PC-3 (cell line): ENCODE measurements at regions of chr17 and their contacts with region 1.

Region 1: GRCh38 chr17:15392326-15392741 is 50.9 kb upstream of the TEKT3 start:
- DNase-seq: peak; percentile 99
- ATAC-seq: peak; percentile 98
- H3K4me3 ChIP-seq: no peak overlapping the region
- H3K27ac ChIP-seq: peak overlapping the region; percentile 93
- H3K4me1 ChIP-seq: peaks cover 23% of the 10 kb centered on the region
- H3K27me3 ChIP-seq: no peaks in the 10 kb centered on the region
- CTCF ChIP-seq: no peak

Region 2: GRCh38 chr17:15348021-15348420 is 44.3 kb before region 1 on chr17:
- CTCF ChIA-PET with region 1: no interaction called
- POLR2A ChIA-PET with region 1: no interaction called
- intact Hi-C with region 1: loop called (anchors 5 kb)
- DNase-seq: peak; percentile 85
- ATAC-seq: peak; percentile 74
- H3K4me3 ChIP-seq: no peak overlapping the region
- H3K27ac ChIP-seq: peak overlapping the region; percentile 64
- H3K4me1 ChIP-seq: peaks cover 61% of the 10 kb centered on the region
- H3K27me3 ChIP-seq: no peaks in the 10 kb centered on the region
- CTCF ChIP-seq: no peak

Region 3: DNA sequence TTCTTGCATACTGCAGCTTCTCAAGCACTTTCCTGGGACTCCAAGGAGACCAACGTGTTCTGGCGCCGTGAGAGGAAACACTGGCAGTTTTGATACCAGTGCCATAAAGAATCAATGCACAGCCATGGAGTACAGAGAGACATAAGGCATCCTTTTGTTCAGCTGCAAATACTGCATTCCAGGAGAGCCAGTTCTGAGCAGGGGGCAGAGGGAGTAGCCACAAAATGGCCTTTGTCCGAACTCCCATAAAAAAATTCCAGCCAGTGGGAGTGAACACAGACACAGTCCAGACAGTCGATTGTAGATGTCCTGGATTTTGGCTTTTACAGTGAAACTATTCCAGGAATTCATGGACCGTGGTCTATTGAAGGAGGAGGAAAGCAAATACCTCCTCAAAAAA is 14.7 kb before region 1 on chr17:
- CTCF ChIA-PET with region 1: no interaction called
- POLR2A ChIA-PET with region 1: no interaction called
- intact Hi-C with region 1: loop called (anchors 2 kb)
- DNase-seq: peak; percentile 97
- ATAC-seq: peak; percentile 74
- H3K4me3 ChIP-seq: peak overlapping the region; percentile 47
- H3K27ac ChIP-seq: peak overlapping the region; percentile 93
- H3K4me1 ChIP-seq: peaks cover 44% of the 10 kb centered on the region
- H3K27me3 ChIP-seq: no peaks in the 10 kb centered on the region
- CTCF ChIP-seq: no peak

Region 4: GRCh38 chr17:15414532-15415306 is 22.4 kb after region 1 on chr17:
- CTCF ChIA-PET with region 1: no interaction called
- POLR2A ChIA-PET with region 1: no interaction called
- intact Hi-C with region 1: no loop called
- DNase-seq: no peak
- ATAC-seq: no peak
- H3K4me3 ChIP-seq: no peak overlapping the region
- H3K27ac ChIP-seq: no peak overlapping the region
- H3K4me1 ChIP-seq: peaks cover 7% of the 10 kb centered on the region
- H3K27me3 ChIP-seq: no peaks in the 10 kb centered on the region
- CTCF ChIP-seq: no peak